AG04450 (cell line): ENCODE measurements at regions of chr11 and their contacts with region 1.

Region 1: DNA sequence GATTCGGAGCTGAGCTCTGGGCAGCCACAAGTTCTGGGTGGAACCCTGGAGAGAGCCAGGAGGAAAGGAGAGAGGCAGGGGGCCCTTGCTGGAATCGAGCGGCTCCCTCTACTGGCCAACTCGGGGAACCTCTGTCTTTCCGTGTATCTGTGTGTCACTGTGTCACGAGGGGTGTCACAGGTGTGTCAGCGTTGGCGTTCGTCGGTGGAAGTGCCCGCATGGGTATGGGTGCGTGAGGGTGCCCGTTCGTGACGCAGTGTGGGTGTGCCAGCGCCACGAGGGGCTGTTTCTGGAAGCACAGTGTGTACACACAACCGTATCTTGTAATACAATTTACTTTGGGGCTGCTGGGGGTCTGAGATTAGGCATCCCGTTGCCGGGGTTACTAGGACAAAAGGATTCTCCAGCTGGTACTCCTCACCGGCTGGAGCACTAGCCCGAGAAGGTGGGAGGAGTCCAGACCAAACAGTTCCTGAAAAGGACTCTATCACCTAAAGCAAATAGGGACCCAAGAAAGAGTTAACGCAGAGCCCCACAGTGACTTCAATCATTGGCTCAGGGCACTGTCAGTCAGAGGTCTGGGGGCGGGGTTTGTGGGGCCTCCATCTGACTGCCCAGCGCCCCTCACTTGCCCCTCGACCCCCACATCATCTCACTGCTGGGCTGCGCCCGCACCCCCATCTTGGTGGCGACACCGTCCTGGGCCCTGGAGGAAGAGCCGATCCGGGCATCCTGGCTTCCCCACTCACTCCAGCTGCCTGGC is 2.6 kb upstream of the BCL9L start:
- DNase-seq: peak; percentile 78
- H3K4me3 ChIP-seq: peak overlapping the region; percentile 74
- H3K27ac ChIP-seq: peak overlapping the region; percentile 57
- H3K27me3 ChIP-seq: no peaks in the 10 kb centered on the region
- CTCF ChIP-seq: peak; percentile 95

Region 2: DNA sequence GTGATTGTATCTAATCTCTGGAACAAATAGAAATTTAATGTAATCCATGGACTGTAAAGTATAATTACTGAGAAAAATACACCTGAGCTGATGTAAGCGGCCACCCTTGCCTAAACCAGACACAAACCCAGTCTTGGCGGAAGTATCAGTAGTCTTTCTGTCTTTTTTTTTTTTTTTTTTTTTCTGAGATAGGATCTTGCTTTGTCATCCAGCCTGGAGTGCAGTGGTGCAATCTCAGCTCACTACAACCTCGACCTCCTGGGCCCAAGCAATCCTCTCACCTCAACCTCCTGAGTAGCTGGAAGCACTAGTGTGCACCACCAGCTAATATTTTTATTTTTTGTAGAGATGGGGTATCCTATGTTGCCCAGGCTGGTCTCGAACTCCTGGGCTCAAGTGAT is 50.1 kb before region 1 on chr11:
- CTCF ChIA-PET with region 1: no interaction called
- POLR2A ChIA-PET with region 1: interaction called, 11 read pairs
- DNase-seq: no peak
- H3K4me3 ChIP-seq: no peak overlapping the region
- H3K27ac ChIP-seq: no peak overlapping the region
- H3K27me3 ChIP-seq: no peaks in the 10 kb centered on the region
- CTCF ChIP-seq: no peak

Region 3: GRCh38 chr11:118895142-118896039 is 32.9 kb before region 1 on chr11:
- CTCF ChIA-PET with region 1: interaction called, 11 read pairs
- POLR2A ChIA-PET with region 1: interaction called, 4 read pairs
- DNase-seq: no peak
- H3K4me3 ChIP-seq: no peak overlapping the region
- H3K27ac ChIP-seq: peak overlapping the region; percentile 11
- H3K27me3 ChIP-seq: no peaks in the 10 kb centered on the region
- CTCF ChIP-seq: no peak

Region 4: GRCh38 chr11:118907051-118908042 is 20.9 kb before region 1 on chr11:
- CTCF ChIA-PET with region 1: interaction called, 76 read pairs
- POLR2A ChIA-PET with region 1: interaction called, 81 read pairs
- DNase-seq: no peak
- H3K4me3 ChIP-seq: peak overlapping the region; percentile 10; the same call in 1 of the 2 replicates
- H3K27ac ChIP-seq: peak overlapping the region; percentile 31
- H3K27me3 ChIP-seq: no peaks in the 10 kb centered on the region
- CTCF ChIP-seq: peak; percentile 88

Region 5: DNA sequence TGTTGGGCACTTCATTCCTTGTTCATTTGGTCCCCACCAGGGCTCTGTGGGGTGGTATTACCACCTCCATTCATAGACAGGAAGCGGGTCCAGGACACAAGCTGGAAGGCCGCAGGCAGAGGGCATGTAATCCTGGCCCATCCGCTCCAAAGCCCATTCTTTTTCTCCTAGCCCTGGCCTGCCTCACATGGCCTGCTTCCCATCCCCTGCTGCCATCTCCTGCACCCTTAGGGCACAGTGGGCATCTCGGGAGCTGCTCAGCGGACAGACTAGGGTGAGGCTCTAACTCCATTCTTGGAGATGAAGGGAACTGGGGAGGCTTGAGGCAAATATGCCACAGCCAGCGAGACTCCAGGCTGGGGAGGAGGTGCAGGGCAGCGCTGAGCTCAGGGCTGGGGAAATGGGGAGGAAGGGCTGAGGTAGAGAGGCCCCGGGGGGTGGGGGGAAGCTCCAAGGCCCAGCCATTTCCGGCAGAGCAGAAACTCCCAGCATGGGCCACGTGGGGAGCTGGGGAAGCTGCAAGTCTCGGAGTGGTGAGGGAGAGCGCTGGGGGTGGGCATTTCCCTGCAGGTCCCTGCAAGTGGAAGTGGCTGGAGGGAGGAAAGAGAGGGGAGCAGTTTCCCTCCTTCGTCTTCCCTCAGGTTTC is 11.8 kb after region 1 on chr11:
- CTCF ChIA-PET with region 1: interaction called, 15 read pairs
- POLR2A ChIA-PET with region 1: interaction called, 5 read pairs
- DNase-seq: no peak
- H3K4me3 ChIP-seq: no peak overlapping the region
- H3K27ac ChIP-seq: no peak overlapping the region
- H3K27me3 ChIP-seq: no peaks in the 10 kb centered on the region
- CTCF ChIP-seq: no peak